ENCODE measurements at regions of chr14 and their contacts with region 1.

Region 1: GRCh38 chr14:96567289-96567899 is 65.2 kb downstream of the PAPOLA start:
- DNase-seq: peak; percentile 10
- H3K4me3 ChIP-seq: no peak overlapping the region
- CTCF ChIP-seq: peak; percentile 47

Region 2: DNA sequence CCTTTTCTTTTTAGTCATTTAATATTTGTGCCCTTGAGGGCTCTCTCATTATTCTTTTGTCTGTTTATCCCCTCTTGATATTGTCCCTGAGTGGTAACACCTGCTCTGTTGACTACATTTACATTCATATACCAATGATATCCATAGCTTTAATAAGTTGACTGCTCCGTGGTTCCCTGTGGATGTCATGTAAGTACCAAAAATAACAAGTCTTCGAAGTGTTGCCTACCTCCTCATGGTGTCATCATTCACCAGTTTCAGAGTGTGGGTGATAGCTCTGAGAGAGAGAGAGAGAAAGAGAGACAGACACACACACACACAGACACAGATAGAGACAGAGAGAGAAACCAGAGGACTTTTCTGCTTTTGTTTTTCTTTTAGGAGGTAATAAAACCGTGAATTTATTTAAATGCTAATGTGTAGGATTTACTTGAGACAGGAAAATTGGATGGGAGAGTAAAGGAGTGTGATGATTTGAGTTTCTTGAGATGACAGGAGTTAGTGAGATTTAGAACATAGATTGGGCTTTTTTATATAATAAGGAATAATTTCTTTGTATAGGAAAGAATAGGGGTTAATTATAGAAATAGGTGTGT is 13.0 kb before region 1 on chr14:
- CTCF ChIA-PET with region 1: interaction called, 84 read pairs
- POLR2A ChIA-PET with region 1: no interaction called
- DNase-seq: no peak
- H3K4me3 ChIP-seq: no peak overlapping the region
- CTCF ChIP-seq: no peak

Region 3: DNA sequence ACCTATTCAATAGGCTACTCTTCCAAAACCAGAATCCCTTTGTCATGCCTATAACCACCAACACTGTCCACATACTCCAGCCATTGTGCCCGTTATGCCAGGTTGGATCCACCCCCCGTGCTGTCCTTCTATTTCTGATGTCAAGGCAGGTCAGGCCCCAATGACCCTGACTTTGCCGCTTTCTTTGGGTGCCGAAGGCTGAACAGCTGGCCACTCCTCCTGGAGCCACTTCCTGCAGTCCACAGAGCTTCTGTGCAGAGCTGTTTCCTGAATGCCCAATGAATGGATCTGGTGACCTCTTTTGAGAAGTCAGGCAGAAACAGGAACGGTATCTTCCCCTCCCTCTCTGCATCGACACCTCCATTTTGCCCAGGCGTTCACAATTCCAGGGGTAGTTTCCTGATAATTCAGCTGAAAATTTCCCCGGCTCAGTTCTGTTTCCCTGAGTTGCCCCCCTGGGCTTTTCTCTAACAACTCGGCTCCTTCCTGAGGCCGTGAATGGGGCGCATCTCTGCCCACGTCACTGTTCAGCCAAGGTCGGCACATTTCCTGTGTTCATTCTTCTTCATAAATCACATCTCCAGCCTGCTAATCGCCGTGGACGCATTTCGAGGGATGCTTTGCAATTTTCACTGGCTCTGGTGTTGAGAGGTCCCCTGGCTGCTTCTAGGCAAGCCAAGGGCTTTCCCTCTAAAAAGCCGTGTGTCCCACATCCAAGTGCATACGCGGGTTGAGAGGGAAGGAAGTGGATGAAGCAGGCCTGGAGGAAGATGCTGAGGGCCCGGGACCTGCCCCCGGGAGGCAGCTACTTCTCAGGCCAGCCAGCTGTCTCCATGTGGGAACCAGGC is 21.2 kb after region 1 on chr14:
- CTCF ChIA-PET with region 1: interaction called, 11 read pairs
- POLR2A ChIA-PET with region 1: no interaction called
- DNase-seq: no peak
- H3K4me3 ChIP-seq: no peak overlapping the region
- CTCF ChIP-seq: no peak

Region 4: DNA sequence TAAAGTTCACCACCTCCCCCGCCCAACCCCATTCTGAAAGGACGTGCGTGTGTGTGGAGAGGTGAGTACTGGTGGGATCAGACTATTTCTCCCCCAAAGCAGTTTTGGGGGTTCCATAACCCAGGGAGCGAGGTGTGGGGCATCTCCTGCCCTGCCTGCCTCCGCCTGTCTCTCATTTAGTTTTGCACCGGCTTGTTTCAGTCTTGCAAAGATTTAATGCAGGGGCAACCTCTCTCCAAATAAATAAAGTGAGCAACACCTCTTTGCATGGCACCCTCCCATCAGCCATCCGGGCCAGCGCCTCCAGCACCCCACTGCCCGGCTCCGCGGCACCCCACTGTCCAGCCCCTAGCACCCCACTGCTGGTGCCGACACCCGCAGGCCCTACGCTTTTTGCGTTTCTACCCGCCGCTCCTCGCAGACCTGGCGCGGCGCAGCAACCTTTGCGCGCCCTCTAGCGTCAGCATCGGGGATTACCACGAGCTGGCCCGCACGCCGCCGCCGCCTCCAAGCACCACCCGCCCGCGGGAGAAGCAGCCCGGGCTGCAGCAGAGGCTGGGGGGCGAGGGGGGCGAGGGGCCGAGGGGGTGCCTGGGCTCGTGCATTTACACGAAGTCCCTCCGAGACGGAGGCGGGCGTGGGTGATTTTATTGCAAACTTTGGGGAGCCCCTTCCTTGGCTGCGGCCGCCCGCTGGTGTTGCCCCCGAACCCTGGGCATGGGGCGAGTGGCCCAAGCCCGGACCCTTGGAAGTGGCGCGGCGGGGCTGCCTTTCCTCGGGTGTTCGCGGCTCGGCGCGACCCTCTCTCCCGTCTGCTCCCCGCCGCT is 174.0 kb after region 1 on chr14:
- CTCF ChIA-PET with region 1: interaction called, 83 read pairs
- POLR2A ChIA-PET with region 1: no interaction called
- DNase-seq: no peak
- H3K4me3 ChIP-seq: peak overlapping the region; percentile 65
- CTCF ChIP-seq: peak; percentile 98